ENCODE measurements at regions of chr1 and their contacts with region 1.

Region 1: DNA sequence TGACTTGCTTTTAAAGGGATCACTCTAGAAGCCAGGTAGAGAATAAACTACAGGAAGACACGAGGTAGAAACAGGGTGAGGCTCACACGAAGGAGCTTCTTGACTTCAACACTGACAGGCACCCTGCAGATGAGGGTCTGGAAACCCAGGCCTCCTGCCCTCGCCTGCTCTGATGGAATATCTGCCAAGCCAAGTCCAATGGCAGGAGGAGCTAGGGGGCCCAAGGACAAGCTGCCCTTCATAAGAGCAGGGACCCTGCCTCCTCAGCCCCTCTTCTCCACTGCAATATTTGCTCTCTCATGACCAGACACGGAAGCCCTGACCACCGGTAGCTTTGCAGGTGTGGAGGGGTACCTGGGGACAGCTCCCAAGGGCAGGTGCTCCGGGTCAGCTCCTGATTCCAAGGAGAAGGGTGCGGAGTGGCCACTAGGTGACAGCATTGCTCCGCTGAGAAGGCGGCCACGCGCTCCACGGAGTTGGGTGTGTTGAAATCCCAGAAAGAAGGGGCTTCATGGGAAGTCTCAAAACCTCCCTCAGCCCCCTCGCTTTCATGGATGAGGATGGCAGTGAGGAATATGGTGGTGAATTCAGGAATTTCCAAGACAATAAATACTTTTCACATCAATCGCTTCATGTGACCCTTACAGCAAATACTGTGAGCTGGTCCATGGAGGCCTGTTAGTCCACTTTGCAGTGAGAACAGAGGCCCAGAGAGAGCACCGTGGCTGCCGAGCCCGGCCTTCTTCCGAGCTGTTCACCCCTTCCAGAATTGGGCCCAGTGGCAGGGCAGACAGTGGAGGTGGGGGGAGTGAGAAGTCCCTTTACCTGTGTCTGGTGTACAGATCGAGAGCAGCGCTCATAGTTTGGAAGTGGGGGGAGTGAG is 33.2 kb upstream of the PAX7 start:
- DNase-seq: peak; percentile 46
- H3K4me3 ChIP-seq: no peak overlapping the region
- H3K27ac ChIP-seq: no peak overlapping the region
- H3K4me1 ChIP-seq: no peaks in the 10 kb centered on the region
- H3K27me3 ChIP-seq: peaks cover 0 to 3% of the 10 kb centered on the region in 2 experiments
- CTCF ChIP-seq: peak; percentile 71 to 92
- POLR2A ChIP-seq: no peak

Region 2: DNA sequence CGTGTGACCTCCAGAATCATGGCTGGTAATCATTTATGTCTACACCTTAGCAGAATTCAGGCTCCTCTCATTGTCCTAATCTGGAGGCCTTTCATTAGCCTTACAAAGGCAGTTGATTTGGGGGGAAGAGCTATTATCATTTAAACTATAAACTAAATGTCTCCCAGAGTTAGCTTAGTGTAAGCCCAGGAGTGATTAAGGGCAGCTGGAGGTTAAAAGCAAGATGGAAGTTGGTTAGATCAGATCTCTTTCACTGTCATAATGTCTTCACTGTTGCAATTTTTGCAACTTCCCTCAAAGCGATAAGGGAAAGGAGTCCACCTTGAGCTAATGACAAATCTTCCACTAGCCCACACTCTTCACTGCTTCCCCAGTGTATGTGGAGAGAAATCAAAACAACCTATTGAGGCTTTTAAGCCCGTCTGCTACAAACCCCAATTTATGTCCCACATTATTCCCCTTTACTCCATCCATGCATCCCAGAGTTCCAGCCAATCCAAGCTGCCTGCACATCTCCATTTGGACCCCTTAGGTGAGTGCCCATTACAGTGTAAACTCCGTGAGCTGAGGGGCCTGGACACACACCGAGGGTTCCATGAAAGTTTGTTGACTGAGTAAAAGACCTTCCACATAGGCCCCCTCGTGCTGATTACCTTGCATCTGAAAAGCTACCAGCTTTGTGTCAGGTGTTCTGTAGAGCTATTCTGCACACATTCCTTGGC is 178.1 kb before region 1 on chr1:
- CTCF ChIA-PET with region 1: no interaction called
- POLR2A ChIA-PET with region 1: no interaction called
- dilution Hi-C with region 1: no loop called
- intact Hi-C with region 1: no loop called
- DNase-seq: no peak
- H3K4me3 ChIP-seq: no peak overlapping the region
- H3K27ac ChIP-seq: no peak overlapping the region
- H3K4me1 ChIP-seq: no peaks in the 10 kb centered on the region
- H3K27me3 ChIP-seq: no peaks in the 10 kb centered on the region
- CTCF ChIP-seq: no peak
- POLR2A ChIP-seq: no peak

Region 3: GRCh38 chr1:18429654-18430053 is 167.7 kb before region 1 on chr1:
- CTCF ChIA-PET with region 1: no interaction called
- POLR2A ChIA-PET with region 1: no interaction called
- dilution Hi-C with region 1: no loop called
- intact Hi-C with region 1: no loop called
- DNase-seq: no peak
- H3K4me3 ChIP-seq: no peak overlapping the region
- H3K27ac ChIP-seq: no peak overlapping the region
- H3K4me1 ChIP-seq: no peaks in the 10 kb centered on the region
- H3K27me3 ChIP-seq: no peaks in the 10 kb centered on the region
- CTCF ChIP-seq: no peak
- POLR2A ChIP-seq: no peak

Region 4: GRCh38 chr1:18581420-18581880 is 16.0 kb before region 1 on chr1:
- CTCF ChIA-PET with region 1: interaction called, 24 read pairs
- POLR2A ChIA-PET with region 1: no interaction called
- dilution Hi-C with region 1: no loop called
- intact Hi-C with region 1: no loop called
- DNase-seq: peak; percentile 8
- H3K4me3 ChIP-seq: no peak overlapping the region
- H3K27ac ChIP-seq: no peak overlapping the region
- H3K4me1 ChIP-seq: no peaks in the 10 kb centered on the region
- H3K27me3 ChIP-seq: no peaks in the 10 kb centered on the region
- CTCF ChIP-seq: peak; percentile 68 to 84
- POLR2A ChIP-seq: no peak

Region 5: DNA sequence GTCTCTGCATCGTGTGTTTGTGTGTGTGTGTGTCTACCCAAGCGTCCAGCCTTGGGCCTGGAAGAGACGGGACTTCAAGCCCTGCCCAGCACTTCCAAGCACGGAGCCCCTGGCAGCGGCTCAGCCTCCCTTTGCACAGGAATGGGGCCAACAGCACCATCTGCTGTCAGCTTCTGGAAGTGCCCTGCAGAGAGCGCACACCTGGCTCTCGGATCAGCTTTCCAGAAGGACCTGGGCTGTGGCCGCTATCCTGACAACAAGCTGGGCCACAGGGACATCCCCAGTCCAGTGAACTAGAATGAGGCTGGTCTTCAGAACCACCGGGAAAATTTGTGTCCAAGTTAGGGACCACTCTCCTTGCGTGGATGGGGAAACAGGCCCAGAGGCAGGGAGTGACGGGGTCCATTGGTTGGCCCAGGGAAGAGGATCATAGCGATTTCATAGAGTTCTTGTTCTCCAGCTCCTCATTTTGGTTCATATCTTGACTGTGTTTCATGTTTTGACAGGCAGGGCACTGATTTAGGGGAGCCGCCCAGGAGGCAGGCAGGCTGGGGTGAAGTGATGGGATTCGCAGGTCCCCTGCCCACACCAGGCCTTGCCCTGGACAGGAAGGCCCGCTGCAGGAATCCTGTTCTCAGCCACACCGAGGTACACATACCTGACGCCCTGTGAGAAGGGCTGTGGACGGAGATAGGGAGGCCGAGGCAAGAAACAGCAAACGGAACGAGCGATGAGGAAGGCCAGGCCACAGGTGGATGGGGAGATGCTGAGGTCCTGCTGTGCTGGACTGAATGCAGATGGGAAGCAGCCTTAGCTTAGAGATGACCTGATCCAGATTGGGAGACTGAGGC is 223.6 kb after region 1 on chr1:
- CTCF ChIA-PET with region 1: interaction called, 206 read pairs
- POLR2A ChIA-PET with region 1: no interaction called
- dilution Hi-C with region 1: no loop called
- intact Hi-C with region 1: loop called (anchors 1 kb)
- DNase-seq: peak; percentile 56
- H3K4me3 ChIP-seq: no peak overlapping the region
- H3K27ac ChIP-seq: no peak overlapping the region
- H3K4me1 ChIP-seq: no peaks in the 10 kb centered on the region
- H3K27me3 ChIP-seq: peaks cover 3% of the 10 kb centered on the region in 2 experiments
- CTCF ChIP-seq: peak; percentile 91 to 96
- POLR2A ChIP-seq: no peak

Region 6: DNA sequence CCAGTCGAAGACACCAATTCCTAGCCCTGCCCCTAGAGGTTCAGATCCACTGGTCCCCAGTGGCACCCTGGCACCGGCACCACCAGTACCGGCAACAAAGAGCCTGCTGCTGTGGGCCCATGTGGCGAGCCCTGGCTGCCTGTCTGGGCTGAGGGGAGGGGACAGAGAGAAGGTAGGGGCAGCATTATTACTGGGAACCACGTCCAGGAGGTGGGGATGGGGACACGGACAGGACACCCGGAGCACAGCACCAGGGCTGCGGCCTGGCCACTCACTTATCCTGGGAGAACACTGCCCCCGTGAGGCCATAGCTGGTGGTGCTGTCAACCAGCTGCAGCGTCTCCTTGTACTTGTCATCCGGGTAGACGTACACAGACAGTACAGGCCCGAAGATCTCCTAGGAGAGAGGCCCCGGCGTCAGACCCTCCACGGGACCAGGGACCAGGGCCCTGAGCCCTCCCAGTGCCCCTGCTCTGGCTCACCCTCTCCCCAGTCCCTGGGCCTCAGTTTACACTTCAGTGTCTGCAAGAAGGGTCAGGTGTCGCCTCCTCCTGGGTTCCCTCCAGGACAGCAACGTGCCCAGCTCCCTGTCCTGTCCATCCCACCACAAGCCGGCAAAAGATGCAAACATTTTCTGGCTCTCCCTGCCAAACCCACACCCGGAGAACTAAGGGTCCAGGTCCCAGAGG is 277.9 kb after region 1 on chr1:
- CTCF ChIA-PET with region 1: interaction called, 127 read pairs
- POLR2A ChIA-PET with region 1: no interaction called
- dilution Hi-C with region 1: no loop called
- intact Hi-C with region 1: loop called (anchors 1 kb)
- DNase-seq: peak; percentile 77
- H3K4me3 ChIP-seq: no peak overlapping the region
- H3K27ac ChIP-seq: no peak overlapping the region
- H3K4me1 ChIP-seq: no peaks in the 10 kb centered on the region
- H3K27me3 ChIP-seq: no peaks in the 10 kb centered on the region
- CTCF ChIP-seq: peak; percentile 88 to 97
- POLR2A ChIP-seq: no peak

Region 7: DNA sequence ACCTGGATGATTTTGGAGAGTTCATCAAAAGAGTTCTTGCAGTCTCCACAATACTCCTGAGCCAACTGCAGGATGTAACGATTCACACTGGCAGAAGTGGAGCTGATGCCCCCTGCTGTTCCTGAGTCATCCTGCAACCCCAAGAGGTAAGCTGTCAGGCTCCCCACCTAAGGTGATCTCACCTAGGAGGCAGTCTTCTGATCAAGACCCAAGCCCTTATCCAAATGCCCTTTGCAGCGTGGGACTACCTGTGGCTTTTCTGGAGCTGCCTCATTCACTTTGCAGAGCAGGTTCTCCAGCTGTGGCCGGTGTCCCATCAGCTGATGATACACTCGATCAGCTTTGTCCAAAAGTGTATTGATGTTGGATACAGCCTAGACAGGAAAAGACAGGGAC is 516.3 kb after region 1 on chr1:
- CTCF ChIA-PET with region 1: interaction called, 5 read pairs
- POLR2A ChIA-PET with region 1: no interaction called
- dilution Hi-C with region 1: no loop called
- intact Hi-C with region 1: loop called (anchors 5 kb)
- DNase-seq: peak; percentile 34
- H3K4me3 ChIP-seq: no peak overlapping the region
- H3K27ac ChIP-seq: no peak overlapping the region
- H3K4me1 ChIP-seq: no peaks in the 10 kb centered on the region
- H3K27me3 ChIP-seq: no peaks in the 10 kb centered on the region
- CTCF ChIP-seq: peak; percentile 42 to 60
- POLR2A ChIP-seq: no peak

Measured in endothelial cell of umbilical vein (primary cell).